Activated CD4-positive, alpha-beta T cell treated with anti-CD3 and anti-CD28 coated beads for 36 hours (primary cell): ENCODE measurements at regions of chr19 and their contacts with region 1.

Region 1: DNA sequence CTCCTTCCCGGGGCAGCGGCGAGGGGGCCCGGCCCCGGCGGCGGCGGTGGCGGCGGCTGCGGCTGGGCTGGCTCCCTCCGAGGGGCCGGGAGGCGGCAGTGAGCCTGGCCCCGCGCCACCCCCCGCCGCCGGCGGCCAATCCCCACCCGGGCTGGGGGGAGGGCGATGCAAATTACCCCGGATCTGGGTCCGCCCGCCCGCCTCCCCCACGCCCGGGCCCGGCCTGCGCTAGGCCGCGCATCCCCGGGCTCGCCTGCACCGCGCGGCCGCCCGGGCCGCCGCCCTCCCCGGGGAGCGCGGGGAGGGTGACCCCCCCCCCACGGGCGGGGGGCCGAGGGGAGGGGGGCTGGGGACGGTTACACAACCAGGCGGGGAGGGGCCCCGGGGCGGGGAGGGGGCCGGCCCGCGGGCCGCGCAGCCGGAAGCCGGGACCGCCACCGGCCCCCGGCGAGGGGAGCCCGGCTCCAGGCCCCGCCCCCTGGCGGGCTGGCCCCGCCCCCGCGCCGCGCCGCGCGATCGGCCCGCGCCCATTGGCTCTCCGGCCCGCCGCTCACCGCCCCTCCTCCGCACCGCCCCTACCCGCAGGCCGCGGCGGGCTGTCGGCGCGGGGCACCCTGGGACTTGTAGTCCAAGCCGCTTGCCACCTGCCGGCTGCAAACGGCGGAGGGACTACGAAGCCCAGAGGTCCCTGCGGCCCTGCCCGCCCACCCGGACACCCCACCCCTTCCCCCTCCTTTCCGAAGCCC is 1.1 kb downstream of the ZBTB7A start:
- DNase-seq: peak; percentile 99
- ATAC-seq: peak; percentile 84
- H3K4me3 Mint-ChIP-seq: peak overlapping the region; percentile 71
- H3K27ac Mint-ChIP-seq: no peak overlapping the region
- H3K4me1 Mint-ChIP-seq: peaks cover 40% of the 10 kb centered on the region
- H3K27me3 Mint-ChIP-seq: no peaks in the 10 kb centered on the region

Region 2: GRCh38 chr19:3505598-3506383 is 559.8 kb before region 1 on chr19 and contains the start of gene FZR1:
- CTCF ChIA-PET with region 1: no interaction called
- POLR2A ChIA-PET with region 1: no interaction called
- intact Hi-C with region 1: loop called in 1 of 2 experiments (anchors 5 kb)
- DNase-seq: peak; percentile 100
- ATAC-seq: peak; percentile 92
- H3K4me3 Mint-ChIP-seq: peak within 1 kb of the TSS; percentile 84
- H3K27ac Mint-ChIP-seq: peak within 1 kb of the TSS; percentile 86
- H3K4me1 Mint-ChIP-seq: peaks cover 45% of the 10 kb centered on the region
- H3K27me3 Mint-ChIP-seq: no peaks in the 10 kb centered on the region
- total RNA-seq, gene FZR1: 40.8 to 50.7 TPM

Region 3: DNA sequence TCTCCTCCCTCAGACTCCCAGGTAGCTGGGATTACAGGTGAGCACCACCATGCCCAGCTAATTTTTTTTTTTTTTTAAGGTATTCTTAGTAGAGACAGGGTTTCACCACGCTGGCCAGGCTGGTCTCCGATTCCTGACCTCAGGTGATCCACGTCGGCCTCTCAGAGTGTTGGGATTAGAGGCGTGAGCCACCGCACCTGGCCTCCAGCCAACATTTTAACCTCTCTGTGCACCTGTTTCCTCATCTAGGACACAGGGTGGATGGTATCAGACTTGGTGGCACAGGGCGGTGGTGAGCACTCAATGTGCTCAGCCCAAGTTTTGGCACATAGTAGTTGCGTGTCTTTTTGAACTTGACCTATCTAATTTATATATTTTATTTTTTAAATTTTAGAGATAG is 316.6 kb before region 1 on chr19:
- CTCF ChIA-PET with region 1: no interaction called
- POLR2A ChIA-PET with region 1: no interaction called
- intact Hi-C with region 1: no loop called
- DNase-seq: no peak
- ATAC-seq: no peak
- H3K4me3 Mint-ChIP-seq: no peak overlapping the region
- H3K27ac Mint-ChIP-seq: no peak overlapping the region
- H3K4me1 Mint-ChIP-seq: no peaks in the 10 kb centered on the region
- H3K27me3 Mint-ChIP-seq: no peaks in the 10 kb centered on the region

Region 4: DNA sequence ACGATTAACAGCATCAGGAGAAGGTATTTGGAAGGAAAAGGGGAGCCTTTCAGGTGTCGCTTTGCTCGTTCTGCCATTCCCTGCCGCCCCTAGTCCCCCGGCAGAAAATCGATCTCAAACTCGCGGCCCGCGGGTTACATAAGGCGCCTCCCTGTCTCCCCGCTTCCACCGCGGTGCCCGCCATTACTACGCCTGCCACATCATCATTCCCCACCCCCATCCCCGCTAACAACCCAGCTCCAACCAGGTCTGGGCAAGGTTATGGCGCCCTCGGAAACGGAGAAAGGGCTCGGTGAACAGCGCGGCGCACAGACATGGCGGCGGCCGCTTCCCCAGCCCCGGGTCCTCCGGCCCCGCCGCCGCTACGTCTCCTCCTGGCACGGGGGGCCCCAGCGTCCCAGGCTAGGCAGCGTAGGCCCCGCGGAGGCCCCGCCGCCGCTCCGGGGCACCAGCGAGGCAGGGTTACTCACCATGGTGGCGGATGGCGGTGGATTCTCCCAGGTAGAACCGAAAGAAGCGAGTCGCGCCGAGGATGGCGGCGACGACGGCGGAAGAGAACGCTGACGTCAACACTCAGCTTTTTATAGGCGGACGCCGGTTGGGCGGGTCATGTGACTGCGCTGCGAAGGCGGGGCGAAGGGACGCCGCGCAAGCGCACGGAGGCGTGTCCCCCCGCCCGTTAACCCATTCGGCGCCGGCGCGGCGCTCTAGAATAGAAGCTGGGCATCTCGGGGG is 80.5 kb before region 1 on chr19 and contains the start of gene EEF2:
- CTCF ChIA-PET with region 1: no interaction called
- POLR2A ChIA-PET with region 1: no interaction called
- intact Hi-C with region 1: loop called (anchors 1 to 5 kb)
- DNase-seq: peak; percentile 94
- ATAC-seq: peak; percentile 45
- H3K4me3 Mint-ChIP-seq: peak within 1 kb of the TSS; percentile 87
- H3K27ac Mint-ChIP-seq: peak within 1 kb of the TSS; percentile 94
- H3K4me1 Mint-ChIP-seq: peaks cover 52% of the 10 kb centered on the region
- H3K27me3 Mint-ChIP-seq: no peaks in the 10 kb centered on the region
- total RNA-seq, gene EEF2: 3,116 to 3,255 TPM

Region 5: DNA sequence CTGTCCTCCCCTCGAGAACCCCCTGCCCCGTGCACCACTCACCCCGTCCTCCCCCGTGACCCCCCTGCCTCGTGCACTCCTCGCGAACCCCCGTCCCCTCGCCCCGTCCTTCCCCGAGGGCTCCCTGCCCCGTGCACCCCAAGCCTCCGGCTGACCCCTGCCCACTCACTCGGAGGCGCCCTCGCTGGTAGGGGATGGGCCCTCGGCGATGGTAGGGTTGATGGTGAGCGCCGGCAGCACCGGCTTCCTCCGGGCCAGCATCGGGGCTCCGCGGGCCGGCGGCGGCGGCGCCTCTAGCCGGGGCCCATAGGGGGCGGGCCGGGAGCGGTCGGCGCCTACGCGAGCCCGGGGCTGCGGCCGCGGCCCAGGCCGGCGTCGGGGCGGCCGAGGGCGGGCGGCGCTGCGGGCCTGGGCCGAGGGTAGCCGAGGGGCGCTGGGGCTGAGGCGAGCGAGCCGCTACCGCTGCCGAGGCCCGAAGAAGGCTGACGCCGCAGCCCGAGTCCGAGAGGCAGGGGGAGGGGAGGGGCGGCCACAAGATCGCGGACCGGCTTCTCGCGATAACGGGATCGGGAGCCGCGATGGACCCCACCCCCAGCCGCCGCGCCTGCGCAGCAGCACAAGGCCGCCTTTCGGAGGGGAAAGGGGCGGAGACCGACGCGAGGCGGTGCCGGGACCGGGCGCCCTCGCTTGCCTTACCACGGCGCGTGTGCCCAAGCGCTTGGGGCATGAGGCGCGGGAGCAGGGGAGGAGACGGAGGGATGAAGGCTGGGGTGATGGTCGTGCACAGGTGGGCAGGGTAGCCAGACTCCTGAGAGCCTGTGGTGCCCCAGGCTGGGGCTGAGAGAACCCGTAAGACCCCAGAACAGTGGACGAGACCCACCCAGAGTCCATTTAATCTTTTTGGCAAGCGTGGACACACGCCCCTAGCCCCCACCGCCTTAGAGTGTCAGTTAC is 58.3 kb after region 1 on chr19 and contains the start of gene MAP2K2:
- CTCF ChIA-PET with region 1: no interaction called
- POLR2A ChIA-PET with region 1: no interaction called
- intact Hi-C with region 1: loop called (anchors 1 to 5 kb)
- DNase-seq: peak; percentile 98
- ATAC-seq: peak; percentile 96
- H3K4me3 Mint-ChIP-seq: peak within 1 kb of the TSS; percentile 97
- H3K27ac Mint-ChIP-seq: peak within 1 kb of the TSS; percentile 92
- H3K4me1 Mint-ChIP-seq: peaks cover 18% of the 10 kb centered on the region
- H3K27me3 Mint-ChIP-seq: no peaks in the 10 kb centered on the region
- total RNA-seq, gene MAP2K2: 108 to 133 TPM

Region 6: GRCh38 chr19:4149518-4150288 is 84.1 kb after region 1 on chr19:
- CTCF ChIA-PET with region 1: no interaction called
- POLR2A ChIA-PET with region 1: no interaction called
- intact Hi-C with region 1: no loop called
- DNase-seq: no peak
- ATAC-seq: no peak
- H3K4me3 Mint-ChIP-seq: no peak overlapping the region
- H3K27ac Mint-ChIP-seq: no peak overlapping the region
- H3K4me1 Mint-ChIP-seq: peaks cover 5% of the 10 kb centered on the region
- H3K27me3 Mint-ChIP-seq: peaks cover 10% of the 10 kb centered on the region

Region 7: GRCh38 chr19:4342615-4343369 is 277.2 kb after region 1 on chr19:
- CTCF ChIA-PET with region 1: no interaction called
- POLR2A ChIA-PET with region 1: no interaction called
- intact Hi-C with region 1: loop called in 1 of 2 experiments (anchors 1 kb)
- DNase-seq: peak; percentile 97
- ATAC-seq: peak; percentile 91
- H3K4me3 Mint-ChIP-seq: peak overlapping the region; percentile 89
- H3K27ac Mint-ChIP-seq: peak overlapping the region; percentile 93
- H3K4me1 Mint-ChIP-seq: peaks cover 17% of the 10 kb centered on the region
- H3K27me3 Mint-ChIP-seq: no peaks in the 10 kb centered on the region

Region 8: DNA sequence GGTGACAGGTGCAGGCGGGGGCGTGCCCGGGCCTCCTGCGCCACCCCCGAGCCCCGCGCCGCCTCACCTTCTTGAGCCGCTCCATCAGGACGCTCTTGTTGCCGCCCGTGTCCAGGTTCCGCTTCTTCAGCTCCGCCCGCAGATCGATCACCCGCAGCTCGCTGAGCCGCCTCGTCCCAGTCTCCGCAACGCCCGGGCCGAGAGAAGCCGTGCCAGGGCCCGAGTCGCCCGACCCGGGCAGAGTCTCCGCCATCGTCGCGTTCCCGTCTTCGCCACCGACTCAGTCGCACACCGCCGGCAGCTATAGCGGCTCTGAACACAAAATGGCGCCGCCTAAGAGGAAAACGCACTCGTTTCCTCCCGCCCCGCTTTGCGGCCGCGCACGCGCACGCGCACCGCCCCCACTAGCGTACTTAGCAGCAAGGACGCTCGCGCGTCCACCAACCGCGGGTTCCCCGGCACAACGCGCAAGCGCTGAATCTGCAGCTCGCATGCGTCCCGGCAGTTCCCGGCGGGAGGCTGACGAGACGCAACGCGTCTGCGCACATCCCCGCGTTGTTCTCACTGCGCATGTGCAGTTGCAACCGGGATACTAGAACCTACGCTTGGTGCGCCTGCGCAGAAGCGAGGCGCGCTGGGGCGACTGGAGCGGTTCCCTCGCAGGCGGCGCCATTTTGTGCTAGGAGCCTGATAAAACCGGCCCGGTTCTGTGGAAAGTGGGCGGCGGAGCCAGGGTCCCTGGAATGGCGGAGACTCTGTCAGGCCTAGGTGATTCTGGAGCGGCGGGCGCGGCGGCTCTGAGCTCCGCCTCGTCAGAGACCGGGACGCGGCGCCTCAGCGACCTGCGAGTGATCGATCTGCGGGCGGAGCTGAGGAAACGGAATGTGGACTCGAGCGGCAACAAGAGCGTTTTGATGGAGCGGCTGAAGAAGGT is 1557.1 kb after region 1 on chr19 and contains the starts of genes SAFB and SAFB2:
- CTCF ChIA-PET with region 1: no interaction called
- POLR2A ChIA-PET with region 1: no interaction called
- intact Hi-C with region 1: loop called in 1 of 2 experiments (anchors 5 kb)
- DNase-seq: peak; percentile 100
- ATAC-seq: peak; percentile 92
- H3K4me3 Mint-ChIP-seq: peak within 1 kb of the TSS; percentile 100
- H3K27ac Mint-ChIP-seq: peak within 1 kb of the TSS; percentile 100
- H3K4me1 Mint-ChIP-seq: peaks cover 66% of the 10 kb centered on the region
- H3K27me3 Mint-ChIP-seq: no peaks in the 10 kb centered on the region
- total RNA-seq, gene SAFB: 100 to 118 TPM
- total RNA-seq, gene SAFB2: 65.0 to 78.6 TPM